Vagina (tissue), 2 donors: ENCODE measurements at regions of chr21 and their contacts with region 1.

Region 1: GRCh38 chr21:29849735-29850176 is 90.0 kb downstream of the GRIK1 start:
- DNase-seq: no peak
- H3K4me3 ChIP-seq: no peak overlapping the region
- H3K27ac ChIP-seq: no peak overlapping the region
- H3K4me1 ChIP-seq: no peaks in the 10 kb centered on the region
- H3K27me3 ChIP-seq: no peaks in the 10 kb centered on the region
- CTCF ChIP-seq: peak; percentile 31 to 60 (median 53)
- POLR2A ChIP-seq: no peak

Region 2: DNA sequence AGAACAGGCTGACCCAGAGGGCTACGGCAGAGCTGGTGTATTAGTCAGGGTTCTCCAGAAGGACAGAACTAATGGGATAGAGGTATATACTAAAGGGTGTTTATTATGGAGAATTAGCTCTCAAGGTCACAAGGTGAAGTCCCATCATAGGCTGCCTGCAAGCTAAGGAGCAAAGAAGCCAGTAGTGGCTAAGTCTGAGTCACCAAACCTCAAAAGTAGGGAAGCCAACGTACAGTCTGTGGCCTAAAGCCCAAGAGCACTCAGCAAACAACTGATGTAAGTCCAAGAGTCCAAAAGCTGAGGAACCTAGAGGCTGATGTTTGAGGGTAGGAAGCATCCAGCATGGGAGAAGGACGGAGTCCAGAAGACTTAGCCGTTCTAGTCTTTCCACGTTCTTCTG is 371.8 kb before region 1 on chr21:
- intact Hi-C with region 1: loop called (anchors 10 kb)
- DNase-seq: no peak
- H3K4me3 ChIP-seq: no peak overlapping the region
- H3K27ac ChIP-seq: no peak overlapping the region
- H3K4me1 ChIP-seq: peaks cover 9% of the 10 kb centered on the region
- H3K27me3 ChIP-seq: no peaks in the 10 kb centered on the region
- CTCF ChIP-seq: no peak
- POLR2A ChIP-seq: no peak

Region 3: GRCh38 chr21:29875036-29875716 is 25.4 kb after region 1 on chr21:
- intact Hi-C with region 1: no loop called
- DNase-seq: no peak
- H3K4me3 ChIP-seq: no peak overlapping the region
- H3K27ac ChIP-seq: no peak overlapping the region
- H3K4me1 ChIP-seq: no peaks in the 10 kb centered on the region
- H3K27me3 ChIP-seq: no peaks in the 10 kb centered on the region
- CTCF ChIP-seq: no peak
- POLR2A ChIP-seq: no peak